GM10248 (cell line): ENCODE measurements at regions of chr6 and their contacts with region 1.

Region 1: GRCh38 chr6:14108571-14109410 is 8.8 kb upstream of the CD83 start:
- DNase-seq: peak; percentile 68
- CTCF ChIP-seq: no peak

Region 2: DNA sequence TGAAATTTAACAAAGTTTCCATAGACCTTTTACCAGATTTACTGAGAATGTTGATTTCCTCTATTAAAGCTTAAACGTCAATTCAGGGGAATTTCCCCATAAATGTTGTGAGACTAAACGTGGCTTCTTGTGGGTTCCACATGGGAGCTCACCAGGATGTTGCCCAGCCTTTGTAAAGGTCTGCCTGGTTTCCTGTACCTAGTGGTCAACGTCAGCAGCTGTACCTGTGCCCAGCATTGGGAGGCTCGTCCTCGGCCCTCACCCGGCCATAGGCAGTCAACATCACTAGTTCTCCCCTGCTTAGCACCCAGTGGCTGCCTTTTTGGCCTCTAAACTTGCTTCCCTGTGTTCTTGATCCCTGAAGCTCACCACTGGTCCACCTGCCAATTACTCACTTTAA is 13.4 kb before region 1 on chr6:
- CTCF ChIA-PET with region 1: interaction called, 22 read pairs
- POLR2A ChIA-PET with region 1: no interaction called
- DNase-seq: peak; percentile 48
- CTCF ChIP-seq: no peak

Region 3: GRCh38 chr6:14178083-14178445 is 69.3 kb after region 1 on chr6:
- CTCF ChIA-PET with region 1: no interaction called
- POLR2A ChIA-PET with region 1: no interaction called
- DNase-seq: no peak
- CTCF ChIP-seq: no peak